ENCODE measurements at regions of chrX and their contacts with region 1.

Region 1: DNA sequence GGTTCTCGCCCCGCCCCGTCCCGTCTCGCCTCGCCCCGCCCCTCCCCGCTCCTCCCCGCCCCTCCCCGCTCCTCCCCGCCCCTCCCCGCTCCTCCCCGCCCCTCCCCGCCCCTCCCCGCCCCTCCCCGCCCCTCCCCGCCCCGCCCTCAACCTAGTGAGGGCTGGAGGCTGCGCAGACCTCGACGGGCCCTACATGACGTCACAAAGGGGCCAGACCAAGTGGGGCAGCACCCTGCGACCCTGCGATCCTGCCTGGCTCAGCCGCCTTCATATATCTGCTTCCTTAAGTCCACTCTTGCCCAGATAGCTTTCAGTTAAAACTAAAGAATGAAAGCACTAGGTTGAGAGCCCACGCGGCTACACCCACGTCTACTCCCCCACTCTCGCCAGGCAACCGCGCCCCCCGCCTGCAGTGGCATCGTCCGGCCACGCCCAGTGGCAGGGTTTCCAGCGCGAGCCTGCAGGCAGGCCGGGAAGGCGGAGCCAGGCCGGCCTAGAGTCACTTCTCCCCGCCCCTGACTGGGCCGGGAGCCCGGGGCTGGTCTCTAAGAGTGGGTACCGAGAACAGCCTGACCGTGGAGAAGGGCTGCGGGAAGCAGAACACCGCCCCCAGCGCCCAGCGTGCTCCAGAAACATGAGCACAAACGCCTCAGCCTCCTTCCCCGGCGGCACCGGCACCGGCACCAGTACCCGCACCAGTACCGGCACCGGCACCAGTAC is 1.5 kb upstream of the MAOA start:
- DNase-seq: peak; percentile 79
- H3K4me3 Mint-ChIP-seq: peak overlapping the region; percentile 86
- H3K27ac Mint-ChIP-seq: peak overlapping the region; percentile 92
- H3K4me1 Mint-ChIP-seq: peaks cover 9% of the 10 kb centered on the region
- H3K27me3 Mint-ChIP-seq: peaks cover 2% of the 10 kb centered on the region

Region 2: GRCh38 chrX:43589735-43590134 is 64.9 kb before region 1 on chrX:
- CTCF ChIA-PET with region 1: no interaction called
- intact Hi-C with region 1: no loop called
- DNase-seq: no peak
- H3K4me3 Mint-ChIP-seq: no peak overlapping the region
- H3K27ac Mint-ChIP-seq: no peak overlapping the region
- H3K4me1 Mint-ChIP-seq: no peaks in the 10 kb centered on the region
- H3K27me3 Mint-ChIP-seq: peaks cover 2% of the 10 kb centered on the region

Region 3: GRCh38 chrX:44542567-44543325 is 888.2 kb after region 1 on chrX and contains the start of gene FUNDC1:
- CTCF ChIA-PET with region 1: no interaction called
- intact Hi-C with region 1: loop called (anchors 2 kb)
- DNase-seq: peak; percentile 94
- H3K4me3 Mint-ChIP-seq: peak within 1 kb of the TSS; percentile 84
- H3K27ac Mint-ChIP-seq: peak within 1 kb of the TSS; percentile 84
- H3K4me1 Mint-ChIP-seq: peaks cover 15% of the 10 kb centered on the region
- H3K27me3 Mint-ChIP-seq: no peaks in the 10 kb centered on the region
- total RNA-seq, gene FUNDC1: 11.9 to 12.8 TPM

Measured in activated naive CD4-positive, alpha-beta T cell treated with anti-CD3 and anti-CD28 coated beads for 36 hours (primary cell).